Psoas muscle (tissue), 8 donors: ENCODE measurements at regions of chr12 and their contacts with region 1.

Region 1: GRCh38 chr12:104215638-104216297 is at the start of gene TXNRD1:
- DNase-seq: peak; percentile 85 to 91
- ATAC-seq: peak; percentile 95 to 99 (median 98)
- H3K4me3 ChIP-seq: peak within 1 kb of the TSS; percentile 77
- H3K27ac ChIP-seq: peak within 1 kb of the TSS; percentile 69
- H3K4me1 ChIP-seq: peaks cover 12% of the 10 kb centered on the region
- H3K27me3 ChIP-seq: no peaks in the 10 kb centered on the region
- CTCF ChIP-seq: peak; percentile 85
- total RNA-seq, gene TXNRD1: 102 to 249 (median 113) TPM

Region 2: DNA sequence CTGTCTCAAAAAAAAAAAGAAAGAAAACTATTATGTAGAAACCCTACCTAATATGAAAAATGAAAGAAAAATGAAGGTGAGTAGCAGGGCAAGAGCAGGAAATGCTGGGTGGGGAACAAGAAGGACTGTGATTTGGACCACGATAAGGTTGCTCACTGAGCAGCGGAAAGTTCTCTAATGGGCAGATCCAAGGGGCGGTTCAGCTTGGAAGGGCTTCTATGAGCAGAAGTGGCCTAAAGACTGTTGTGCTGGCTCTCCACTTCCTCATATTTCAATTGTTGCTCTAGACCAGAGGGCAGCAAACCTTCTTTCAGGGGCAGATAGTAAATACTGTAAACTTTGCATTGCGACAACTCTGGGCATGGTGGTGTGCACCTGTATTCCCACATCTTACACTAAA is 61.5 kb before region 1 on chr12:
- intact Hi-C with region 1: no loop called
- DNase-seq: no peak
- ATAC-seq: no peak
- H3K4me3 ChIP-seq: no peak overlapping the region
- H3K27ac ChIP-seq: no peak overlapping the region
- H3K4me1 ChIP-seq: no peaks in the 10 kb centered on the region
- H3K27me3 ChIP-seq: no peaks in the 10 kb centered on the region
- CTCF ChIP-seq: no peak

Region 3: DNA sequence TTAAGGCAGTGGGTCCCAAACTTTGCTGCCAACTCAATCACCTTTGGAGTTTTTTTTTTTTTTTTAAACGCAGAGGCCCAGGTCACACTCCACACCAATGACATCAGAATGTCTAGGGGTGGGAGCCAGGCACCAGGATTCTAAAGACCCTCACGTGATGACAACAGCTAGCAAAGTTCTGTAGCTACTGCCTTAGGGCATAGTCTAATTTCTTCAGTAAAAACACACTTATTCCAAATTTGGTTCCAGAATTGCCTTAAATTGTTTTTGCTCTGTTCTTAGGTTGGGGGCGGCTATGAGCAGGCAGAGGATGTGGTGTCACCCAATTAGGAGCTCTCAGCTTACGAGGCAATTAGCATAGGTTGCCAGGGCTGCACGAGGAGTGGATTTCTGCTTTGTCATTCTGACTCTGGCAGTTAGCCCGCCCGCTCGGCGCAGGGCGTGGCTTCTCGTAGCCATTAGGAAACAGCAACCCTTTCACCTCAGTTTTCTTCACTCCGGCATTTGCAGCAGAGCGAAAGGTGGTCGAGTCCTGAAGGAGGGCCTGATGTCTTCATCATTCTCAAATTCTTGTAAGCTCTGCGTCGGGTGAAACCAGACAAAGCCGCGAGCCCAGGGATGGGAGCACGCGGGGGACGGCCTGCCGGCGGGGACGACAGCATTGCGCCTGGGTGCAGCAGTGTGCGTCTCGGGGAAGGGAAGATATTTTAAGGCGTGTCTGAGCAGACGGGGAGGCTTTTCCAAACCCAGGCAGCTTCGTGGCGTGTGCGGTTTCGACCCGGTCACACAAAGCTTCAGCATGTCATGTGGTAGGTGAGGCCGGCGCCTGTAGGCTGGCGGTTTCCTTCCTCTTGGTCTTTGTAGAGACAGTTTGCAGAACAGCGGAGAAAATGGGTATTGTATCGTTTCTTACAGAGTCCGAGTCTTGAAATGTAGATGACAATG is 71.0 kb after region 1 on chr12:
- intact Hi-C with region 1: loop called (anchors 2 to 5 kb)
- DNase-seq: peak; percentile 93 to 95
- ATAC-seq: peak; percentile 82 to 89 (median 86)
- H3K4me3 ChIP-seq: peak overlapping the region; percentile 90
- H3K27ac ChIP-seq: peak overlapping the region; percentile 98
- H3K4me1 ChIP-seq: peaks cover 35% of the 10 kb centered on the region
- H3K27me3 ChIP-seq: no peaks in the 10 kb centered on the region
- CTCF ChIP-seq: no peak

Region 4: DNA sequence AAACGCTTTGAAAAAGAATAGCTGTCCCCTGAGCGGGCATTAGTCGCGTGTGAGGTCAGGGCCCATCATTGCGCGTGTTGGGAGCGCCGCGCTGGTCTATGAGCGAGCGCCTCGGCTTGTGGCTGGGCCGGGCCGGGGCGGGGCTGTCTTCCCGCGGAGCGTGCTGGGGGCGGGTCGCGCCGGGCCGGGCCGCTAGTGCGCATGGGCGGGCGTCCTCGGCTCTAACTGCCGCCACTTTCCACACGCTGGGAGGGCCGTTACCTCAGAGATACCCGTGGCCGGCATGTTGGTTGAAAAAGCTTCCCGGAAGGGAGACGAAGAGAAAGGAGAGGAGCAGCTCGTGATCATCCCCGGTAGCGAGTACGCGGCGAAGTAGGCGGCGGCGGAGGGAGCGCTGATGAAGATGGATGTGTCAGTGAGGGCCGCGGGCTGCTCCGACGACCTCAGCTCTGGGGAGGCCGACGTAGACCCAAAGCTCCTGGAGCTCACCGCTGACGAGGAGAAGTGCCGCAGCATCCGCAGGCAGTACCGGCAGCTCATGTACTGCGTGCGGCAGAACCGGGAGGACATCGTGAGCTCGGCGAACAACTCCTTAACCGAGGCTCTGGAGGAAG is 87.9 kb after region 1 on chr12 and contains the start of gene EID3:
- intact Hi-C with region 1: loop called in 1 of 2 experiments (anchors 5 kb)
- DNase-seq: peak; percentile 92 to 96
- ATAC-seq: peak; percentile 98 to 100 (median 99)
- H3K4me3 ChIP-seq: peak within 1 kb of the TSS; percentile 61
- H3K27ac ChIP-seq: peak within 1 kb of the TSS; percentile 82
- H3K4me1 ChIP-seq: peaks cover 77% of the 10 kb centered on the region
- H3K27me3 ChIP-seq: no peaks in the 10 kb centered on the region
- CTCF ChIP-seq: no peak
- total RNA-seq, gene EID3: 0.94 to 1.3 (median 0.99) TPM

Region 5: DNA sequence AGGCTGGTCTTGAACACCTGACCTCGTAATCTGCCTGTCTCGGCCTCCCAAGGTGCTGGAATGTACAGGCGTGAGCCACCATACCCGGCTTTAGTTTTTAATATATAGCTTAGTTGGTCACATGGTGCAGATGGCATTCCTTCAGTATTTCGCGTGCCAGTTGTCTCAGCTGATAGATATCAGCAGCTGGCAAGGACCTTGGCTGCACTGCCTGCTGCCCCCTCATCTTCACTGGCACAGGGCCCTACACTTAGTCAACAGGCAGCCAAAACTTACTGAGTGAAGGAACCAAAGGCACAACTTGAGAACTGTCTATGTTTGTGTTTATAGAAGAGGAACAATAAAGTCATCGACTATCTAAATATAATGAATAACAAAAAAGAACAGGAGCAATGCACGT is 118.8 kb after region 1 on chr12:
- intact Hi-C with region 1: no loop called
- DNase-seq: no peak
- ATAC-seq: peak; percentile 32 to 48 (median 37)
- H3K4me3 ChIP-seq: no peak overlapping the region
- H3K27ac ChIP-seq: no peak overlapping the region
- H3K4me1 ChIP-seq: no peaks in the 10 kb centered on the region
- H3K27me3 ChIP-seq: no peaks in the 10 kb centered on the region
- CTCF ChIP-seq: no peak

Region 6: GRCh38 chr12:104358347-104359003 is 142.7 kb after region 1 on chr12:
- intact Hi-C with region 1: loop called in 1 of 2 experiments (anchors 2 kb)
- DNase-seq: peak; percentile 32 to 67
- ATAC-seq: peak; percentile 56 to 84 (median 76)
- H3K4me3 ChIP-seq: no peak overlapping the region
- H3K27ac ChIP-seq: no peak overlapping the region
- H3K4me1 ChIP-seq: no peaks in the 10 kb centered on the region
- H3K27me3 ChIP-seq: no peaks in the 10 kb centered on the region
- CTCF ChIP-seq: peak; percentile 78